Heart left ventricle (tissue), 16 donors: ENCODE measurements at regions of chr6 and their contacts with region 1.

Region 1: DNA sequence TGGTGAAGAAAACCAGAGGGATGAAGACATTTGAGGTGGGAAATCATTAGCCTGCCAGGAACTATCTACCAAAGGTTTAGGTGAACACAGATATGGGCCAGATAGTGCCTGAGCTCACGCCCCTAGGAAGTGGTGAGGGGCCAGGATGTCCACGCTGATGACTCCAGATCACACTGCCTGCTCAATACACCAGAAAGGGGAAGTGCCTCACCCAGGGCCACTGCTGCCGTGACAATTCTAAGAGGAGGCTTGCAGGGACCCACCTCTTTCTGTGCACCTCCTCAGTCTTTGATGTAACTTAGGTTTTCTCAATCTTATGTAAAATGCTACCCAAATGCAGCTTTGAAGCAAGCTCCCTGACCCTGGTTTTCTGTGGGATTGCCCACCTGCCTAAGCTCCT is 5.4 kb upstream of the RAB44 start:
- DNase-seq: no peak
- ATAC-seq: peak in 2 of 4 donors; percentile 42 to 47
- H3K4me3 ChIP-seq: no peak overlapping the region
- H3K27ac ChIP-seq: peak overlapping the region in 2 of 12 donors; percentile 1 to 51
- H3K4me1 ChIP-seq: peaks cover 0 to 19% (median 12%) of the 10 kb centered on the region in 12 donors
- H3K27me3 ChIP-seq: no peaks in the 10 kb centered on the region
- CTCF ChIP-seq: no peak
- POLR2A ChIP-seq: no peak

Region 2: GRCh38 chr6:36414481-36414880 is 277.7 kb before region 1 on chr6:
- intact Hi-C with region 1: loop called in 1 of 10 experiments (anchors 10 kb)
- DNase-seq: no peak
- ATAC-seq: no peak
- H3K4me3 ChIP-seq: no peak overlapping the region
- H3K27ac ChIP-seq: no peak overlapping the region
- H3K4me1 ChIP-seq: no peaks in the 10 kb centered on the region
- H3K27me3 ChIP-seq: no peaks in the 10 kb centered on the region
- CTCF ChIP-seq: no peak
- POLR2A ChIP-seq: no peak

Region 3: DNA sequence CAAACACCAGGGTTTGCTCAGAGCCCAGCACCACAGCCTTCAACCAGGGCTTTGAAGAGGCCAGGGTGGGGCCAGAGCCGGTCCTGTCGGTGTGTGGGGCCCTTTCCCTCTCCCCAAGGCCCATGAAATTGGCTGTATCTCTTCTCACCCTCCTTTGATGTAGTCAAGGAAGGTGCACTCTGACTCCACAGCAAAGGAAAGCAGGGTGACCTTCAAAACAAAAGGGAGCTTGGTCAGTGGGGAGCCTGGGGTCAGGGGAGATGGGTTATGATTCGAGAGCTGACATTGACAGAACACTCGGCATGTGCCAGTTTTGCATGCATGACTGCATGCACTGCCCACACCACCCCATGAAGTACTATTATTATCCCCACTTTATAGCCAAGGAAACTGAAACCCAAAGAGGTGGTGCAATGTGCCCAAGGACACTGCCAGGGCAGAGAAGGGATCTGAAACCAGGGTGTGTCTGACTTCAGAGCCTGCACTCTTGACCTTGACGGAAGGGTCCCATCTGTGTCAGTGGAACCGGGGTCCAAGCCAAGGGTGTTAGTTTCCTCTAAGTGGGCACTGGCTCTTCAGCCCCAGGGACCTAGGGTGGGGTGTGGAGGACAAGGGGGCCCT is 60.8 kb after region 1 on chr6:
- intact Hi-C with region 1: loop called in 2 of 10 experiments (anchors 2 to 10 kb)
- DNase-seq: no peak
- ATAC-seq: peak in 3 of 4 donors; percentile 25 to 58 (median 28)
- H3K4me3 ChIP-seq: no peak overlapping the region
- H3K27ac ChIP-seq: peak overlapping the region in 1 of 12 donors; percentile 52
- H3K4me1 ChIP-seq: peaks cover 0 to 67% (median 1%) of the 10 kb centered on the region in 12 donors
- H3K27me3 ChIP-seq: no peaks in the 10 kb centered on the region
- CTCF ChIP-seq: no peak
- POLR2A ChIP-seq: no peak

Region 4: GRCh38 chr6:36793913-36794712 is 101.9 kb after region 1 on chr6:
- intact Hi-C with region 1: no loop called
- DNase-seq: no peak
- ATAC-seq: peak in 3 of 4 donors; percentile 1 to 24 (median 21)
- H3K4me3 ChIP-seq: no peak overlapping the region
- H3K27ac ChIP-seq: no peak overlapping the region
- H3K4me1 ChIP-seq: peaks cover 0 to 6% (median 0%) of the 10 kb centered on the region in 12 donors
- H3K27me3 ChIP-seq: no peaks in the 10 kb centered on the region
- CTCF ChIP-seq: no peak
- POLR2A ChIP-seq: no peak